Activated CD4-positive, alpha-beta T cell treated with anti-CD3 and anti-CD28 coated beads for 36 hours (primary cell): ENCODE measurements at regions of chr7 and their contacts with region 1.

Region 1: GRCh38 chr7:90816511-90817142 is 220.5 kb downstream of the CDK14 start:
- DNase-seq: peak; percentile 8
- ATAC-seq: peak; percentile 99
- H3K4me3 Mint-ChIP-seq: no peak overlapping the region
- H3K27ac Mint-ChIP-seq: no peak overlapping the region
- H3K4me1 Mint-ChIP-seq: peaks cover 6% of the 10 kb centered on the region
- H3K27me3 Mint-ChIP-seq: peaks cover 4% of the 10 kb centered on the region

Region 2: GRCh38 chr7:89908736-89909135 is 907.9 kb before region 1 on chr7:
- CTCF ChIA-PET with region 1: no interaction called
- POLR2A ChIA-PET with region 1: no interaction called
- intact Hi-C with region 1: no loop called
- DNase-seq: no peak
- ATAC-seq: no peak
- H3K4me3 Mint-ChIP-seq: no peak overlapping the region
- H3K27ac Mint-ChIP-seq: no peak overlapping the region
- H3K4me1 Mint-ChIP-seq: no peaks in the 10 kb centered on the region
- H3K27me3 Mint-ChIP-seq: no peaks in the 10 kb centered on the region

Region 3: DNA sequence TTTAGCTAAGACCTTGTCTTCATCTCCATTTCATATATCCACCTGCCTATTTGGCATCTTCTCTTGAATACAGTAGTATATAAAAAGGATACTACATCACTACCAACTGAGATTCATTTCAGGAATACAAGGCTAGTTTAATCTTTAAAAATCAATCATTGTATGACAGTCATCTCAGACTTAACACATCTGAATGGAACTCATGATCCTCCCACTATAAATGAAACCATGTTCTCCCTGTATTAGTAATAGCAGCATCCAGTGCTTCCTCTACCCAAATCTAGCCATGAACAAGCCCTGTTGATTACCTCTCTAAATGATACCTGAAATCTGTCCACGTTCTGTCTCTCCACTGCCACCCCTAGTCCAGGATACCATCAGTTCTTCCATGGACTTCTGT is 24.3 kb before region 1 on chr7:
- CTCF ChIA-PET with region 1: no interaction called
- POLR2A ChIA-PET with region 1: no interaction called
- intact Hi-C with region 1: loop called in 1 of 2 experiments (anchors 1 kb)
- DNase-seq: no peak
- ATAC-seq: peak; percentile 71
- H3K4me3 Mint-ChIP-seq: no peak overlapping the region
- H3K27ac Mint-ChIP-seq: no peak overlapping the region
- H3K4me1 Mint-ChIP-seq: no peaks in the 10 kb centered on the region
- H3K27me3 Mint-ChIP-seq: no peaks in the 10 kb centered on the region

Region 4: GRCh38 chr7:91367812-91368578 is 551.4 kb after region 1 on chr7:
- CTCF ChIA-PET with region 1: no interaction called
- POLR2A ChIA-PET with region 1: no interaction called
- intact Hi-C with region 1: no loop called
- DNase-seq: no peak
- ATAC-seq: no peak
- H3K4me3 Mint-ChIP-seq: no peak overlapping the region
- H3K27ac Mint-ChIP-seq: no peak overlapping the region
- H3K4me1 Mint-ChIP-seq: no peaks in the 10 kb centered on the region
- H3K27me3 Mint-ChIP-seq: peaks cover 8% of the 10 kb centered on the region